Tibial artery (tissue), 4 donors: ENCODE measurements at regions of chr5 and their contacts with region 1.

Region 1: GRCh38 chr5:55885359-55885758 is 34.2 kb downstream of the IL31RA start:
- DNase-seq: no peak
- H3K4me3 ChIP-seq: no peak overlapping the region
- H3K27ac ChIP-seq: no peak overlapping the region
- H3K4me1 ChIP-seq: no peaks in the 10 kb centered on the region
- H3K27me3 ChIP-seq: no peaks in the 10 kb centered on the region
- CTCF ChIP-seq: no peak

Region 2: GRCh38 chr5:55865831-55866230 is 19.5 kb before region 1 on chr5:
- intact Hi-C with region 1: loop called (anchors 1 kb)
- DNase-seq: no peak
- H3K4me3 ChIP-seq: no peak overlapping the region
- H3K27ac ChIP-seq: no peak overlapping the region
- H3K4me1 ChIP-seq: peaks cover 0 to 8% (median 2%) of the 10 kb centered on the region in 4 donors
- H3K27me3 ChIP-seq: no peaks in the 10 kb centered on the region
- CTCF ChIP-seq: no peak

Region 3: GRCh38 chr5:55936100-55936693 is 50.8 kb after region 1 on chr5:
- intact Hi-C with region 1: no loop called
- DNase-seq: peak; percentile 77 to 82
- H3K4me3 ChIP-seq: no peak overlapping the region
- H3K27ac ChIP-seq: no peak overlapping the region
- H3K4me1 ChIP-seq: no peaks in the 10 kb centered on the region
- H3K27me3 ChIP-seq: no peaks in the 10 kb centered on the region
- CTCF ChIP-seq: peak; percentile 64 to 77